Posterior cingulate gyrus (tissue), 11 donors: ENCODE measurements at regions of chr17 and their contacts with region 1.

Region 1: GRCh38 chr17:80364216-80364618 is 50.8 kb upstream of the ENDOV start:
- DNase-seq: peak in 5 of 10 donors; percentile 24 to 86 (median 26)

Region 2: GRCh38 chr17:80008383-80008840 is 355.8 kb before region 1 on chr17:
- intact Hi-C with region 1: loop called (anchors 5 kb)
- DNase-seq: peak in 9 of 10 donors; percentile 53 to 95 (median 69)

Region 3: GRCh38 chr17:80082403-80083135 is 281.6 kb before region 1 on chr17:
- intact Hi-C with region 1: loop called (anchors 10 kb)
- DNase-seq: peak in 8 of 10 donors; percentile 45 to 89 (median 57)

Region 4: GRCh38 chr17:80248920-80249710 is 115.1 kb before region 1 on chr17:
- intact Hi-C with region 1: no loop called
- DNase-seq: peak in 4 of 10 donors; percentile 0 to 64 (median 62)